Aorta (tissue), 5 donors: ENCODE measurements at regions of chr14 and their contacts with region 1.

Region 1: DNA sequence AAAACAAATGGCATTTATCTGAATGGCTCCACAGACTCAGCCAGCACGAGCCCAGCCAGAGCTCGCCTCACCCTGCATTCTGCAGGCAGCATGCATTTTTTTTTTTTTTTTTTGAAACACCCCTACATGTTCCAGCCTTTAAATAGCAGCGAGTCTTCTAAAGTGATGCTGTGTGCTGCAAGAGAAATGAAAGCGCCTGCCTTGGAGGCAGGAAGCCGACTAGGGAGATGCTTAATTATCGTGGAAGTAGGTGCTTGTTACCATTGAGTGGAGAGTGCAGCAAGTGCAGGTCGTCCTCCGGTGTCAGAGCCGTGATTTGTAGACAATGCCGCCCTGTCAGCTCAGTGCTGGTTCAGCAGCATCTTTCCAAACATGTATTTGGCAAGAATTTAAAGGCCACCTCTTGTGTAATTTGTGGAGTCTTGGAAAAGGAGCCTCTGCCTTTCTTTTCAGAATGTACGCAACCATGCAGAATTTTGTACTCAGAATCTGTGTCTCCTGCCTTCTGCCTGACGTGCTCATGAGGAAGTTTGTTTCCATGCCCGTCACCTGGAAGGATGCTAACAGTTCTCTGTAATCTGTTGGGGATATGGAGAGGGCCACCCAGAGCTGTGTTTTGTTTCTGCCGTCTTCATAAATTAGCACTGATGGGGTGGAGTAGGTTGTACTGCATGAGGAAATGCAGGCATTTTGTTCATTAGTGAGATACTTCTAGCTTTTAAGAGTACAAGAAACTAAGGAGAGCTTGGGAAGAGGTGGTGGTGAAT is 345.9 kb upstream of the RGS6 start:
- DNase-seq: peak in 1 of 2 donors; percentile 44
- ATAC-seq: peak; percentile 74
- H3K4me3 ChIP-seq: peak overlapping the region; percentile 38 to 94
- H3K27ac ChIP-seq: peak overlapping the region in 1 of 2 donors; percentile 82
- H3K4me1 ChIP-seq: peaks cover 0 to 2% of the 10 kb centered on the region in 2 donors
- H3K27me3 ChIP-seq: no peaks in the 10 kb centered on the region

Region 2: GRCh38 chr14:71720978-71721624 is 134.8 kb after region 1 on chr14:
- intact Hi-C with region 1: loop called in 1 of 2 experiments (anchors 10 kb)
- DNase-seq: no peak
- ATAC-seq: peak; percentile 74
- H3K4me3 ChIP-seq: no peak overlapping the region
- H3K27ac ChIP-seq: no peak overlapping the region
- H3K4me1 ChIP-seq: peaks cover 2 to 3% of the 10 kb centered on the region in 2 donors
- H3K27me3 ChIP-seq: no peaks in the 10 kb centered on the region